ENCODE measurements at regions of chr20 and their contacts with region 1.

Region 1: DNA sequence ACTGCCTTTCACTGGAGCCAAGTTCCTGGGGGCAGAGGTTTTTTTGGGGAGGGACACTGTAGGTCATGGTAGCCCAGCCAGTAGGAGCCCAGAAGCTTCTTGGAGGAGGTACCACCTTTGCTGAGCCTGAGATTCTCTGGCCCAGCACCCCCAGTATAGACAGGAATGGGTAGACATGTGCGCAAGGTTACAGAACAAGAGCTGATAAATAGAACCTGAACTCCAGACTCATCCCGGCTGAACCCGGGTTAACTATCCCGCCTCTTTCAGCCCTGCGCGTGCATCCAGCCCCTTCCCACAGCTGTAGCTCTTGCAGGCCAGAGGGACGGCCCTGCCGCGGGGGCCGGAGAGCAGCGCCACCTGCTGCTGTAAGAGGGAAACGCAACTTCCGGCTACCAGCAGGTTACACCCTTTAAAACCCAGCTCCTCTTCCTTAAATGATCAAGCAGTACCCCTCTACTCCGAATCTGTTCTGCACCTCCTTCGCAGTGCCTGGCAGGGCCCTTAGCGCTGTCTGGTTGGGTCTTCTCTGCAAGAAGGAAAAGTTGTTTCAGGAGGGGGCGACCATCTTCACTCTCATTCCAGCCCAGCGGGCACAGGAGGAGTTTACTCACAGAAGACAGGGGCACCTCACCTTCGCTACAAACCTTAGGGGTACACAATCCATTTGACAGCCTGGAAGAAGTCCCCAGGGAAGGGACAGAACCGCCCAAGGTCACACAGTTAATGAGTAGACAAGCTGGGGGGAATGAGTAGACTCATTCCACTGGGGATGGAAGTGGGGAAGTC is 7.5 kb downstream of the SRXN1 start:
- DNase-seq: peak; percentile 89
- CTCF ChIP-seq: peak; percentile 97

Region 2: GRCh38 chr20:354298-355064 is 291.0 kb before region 1 on chr20:
- CTCF ChIA-PET with region 1: interaction called, 16 read pairs
- POLR2A ChIA-PET with region 1: no interaction called
- DNase-seq: peak; percentile 91
- CTCF ChIP-seq: peak; percentile 95

Region 3: DNA sequence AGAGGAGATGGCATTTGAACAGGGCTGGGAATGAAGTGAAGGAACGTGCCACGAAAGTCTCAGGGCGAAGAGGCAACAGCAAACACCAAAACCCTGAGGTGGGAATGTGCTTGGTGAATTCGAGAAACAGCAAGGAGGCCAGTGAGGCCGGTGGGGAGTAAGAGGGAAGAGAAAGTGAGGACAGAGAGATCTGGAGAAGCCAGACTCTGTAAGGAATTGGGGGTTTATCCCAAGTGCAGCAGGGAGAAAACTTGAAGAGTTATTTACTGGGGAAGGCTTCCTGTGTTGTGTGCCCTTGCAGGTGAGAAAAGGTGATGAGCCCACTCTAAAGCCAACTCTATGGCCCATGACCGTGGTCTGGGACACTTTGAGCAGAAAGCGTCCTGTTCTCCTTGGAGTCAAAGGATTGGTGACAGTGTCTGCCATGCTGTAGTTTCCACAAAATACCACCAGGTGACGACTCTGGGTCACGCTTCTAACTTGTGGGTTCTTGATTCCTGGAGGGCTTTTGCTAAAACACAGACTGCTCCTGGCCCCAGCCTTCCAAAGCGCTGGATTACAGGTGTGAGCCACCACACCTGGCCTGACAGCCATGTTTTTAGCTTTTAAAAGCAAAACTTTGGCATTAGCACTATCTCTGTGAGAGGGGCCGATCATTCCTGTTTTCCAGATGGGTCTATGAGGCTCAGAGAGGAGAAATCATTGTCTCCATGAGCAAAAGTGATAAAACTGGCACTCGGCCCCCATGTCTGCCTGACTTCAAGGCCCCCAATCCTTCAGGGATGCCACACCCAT is 83.9 kb before region 1 on chr20:
- CTCF ChIA-PET with region 1: interaction called, 138 read pairs
- POLR2A ChIA-PET with region 1: interaction called, 3 read pairs
- DNase-seq: peak; percentile 78
- CTCF ChIP-seq: peak; percentile 91

Region 4: GRCh38 chr20:621125-621756 is 24.3 kb before region 1 on chr20:
- CTCF ChIA-PET with region 1: interaction called, 15 read pairs
- POLR2A ChIA-PET with region 1: no interaction called
- DNase-seq: no peak
- CTCF ChIP-seq: no peak

Region 5: GRCh38 chr20:661474-662270 is 16.2 kb after region 1 on chr20:
- CTCF ChIA-PET with region 1: interaction called, 69 read pairs
- POLR2A ChIA-PET with region 1: no interaction called
- DNase-seq: no peak
- CTCF ChIP-seq: no peak

Region 6: GRCh38 chr20:1130847-1131246 is 485.3 kb after region 1 on chr20:
- CTCF ChIA-PET with region 1: no interaction called
- POLR2A ChIA-PET with region 1: no interaction called
- DNase-seq: peak; percentile 34
- CTCF ChIP-seq: no peak